ENCODE measurements at regions of chrX and their contacts with region 1.

Region 1: DNA sequence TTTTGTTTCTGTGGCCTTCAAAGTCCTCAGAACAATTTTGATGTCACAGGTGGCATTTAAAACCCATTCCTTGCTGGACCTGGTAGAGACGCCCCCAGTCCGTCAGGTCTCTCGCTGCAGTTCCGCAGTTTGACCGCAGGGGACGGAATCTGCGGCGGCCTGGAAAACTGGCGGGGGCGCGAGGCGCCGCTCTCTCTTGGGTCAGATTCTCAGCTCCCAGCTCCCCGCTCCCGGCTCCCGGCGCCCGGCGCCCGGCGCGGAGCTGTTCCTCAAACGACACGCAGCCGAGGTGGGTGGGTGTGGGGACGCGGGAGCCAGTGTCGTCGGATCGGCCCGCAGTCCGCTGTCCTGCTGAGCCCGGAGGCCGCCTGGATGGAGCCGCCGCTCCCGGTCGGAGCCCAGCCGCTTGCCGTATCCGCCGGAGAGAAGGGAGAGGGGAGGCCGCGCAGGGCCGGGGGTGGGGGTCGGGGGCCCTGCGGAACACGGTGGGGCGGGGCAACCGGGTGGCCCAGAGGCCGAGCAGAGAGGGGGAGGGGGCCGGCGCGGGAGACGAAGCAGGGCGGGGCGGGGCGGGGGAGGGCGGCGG is at the start of gene OCRL:
- DNase-seq: peak; percentile 66
- H3K4me3 ChIP-seq: peak within 1 kb of the TSS; percentile 53 to 79 (median 55)
- H3K27ac ChIP-seq: peak within 1 kb of the TSS; percentile 44
- H3K4me1 ChIP-seq: peaks cover 10% of the 10 kb centered on the region
- H3K27me3 ChIP-seq: peaks cover 0 to 2% of the 10 kb centered on the region in 2 experiments
- CTCF ChIP-seq: peak; percentile 43 to 74
- POLR2A ChIP-seq: no peak
- total RNA-seq, gene OCRL: 19.7 and 20.9 TPM in 2 replicates

Region 2: DNA sequence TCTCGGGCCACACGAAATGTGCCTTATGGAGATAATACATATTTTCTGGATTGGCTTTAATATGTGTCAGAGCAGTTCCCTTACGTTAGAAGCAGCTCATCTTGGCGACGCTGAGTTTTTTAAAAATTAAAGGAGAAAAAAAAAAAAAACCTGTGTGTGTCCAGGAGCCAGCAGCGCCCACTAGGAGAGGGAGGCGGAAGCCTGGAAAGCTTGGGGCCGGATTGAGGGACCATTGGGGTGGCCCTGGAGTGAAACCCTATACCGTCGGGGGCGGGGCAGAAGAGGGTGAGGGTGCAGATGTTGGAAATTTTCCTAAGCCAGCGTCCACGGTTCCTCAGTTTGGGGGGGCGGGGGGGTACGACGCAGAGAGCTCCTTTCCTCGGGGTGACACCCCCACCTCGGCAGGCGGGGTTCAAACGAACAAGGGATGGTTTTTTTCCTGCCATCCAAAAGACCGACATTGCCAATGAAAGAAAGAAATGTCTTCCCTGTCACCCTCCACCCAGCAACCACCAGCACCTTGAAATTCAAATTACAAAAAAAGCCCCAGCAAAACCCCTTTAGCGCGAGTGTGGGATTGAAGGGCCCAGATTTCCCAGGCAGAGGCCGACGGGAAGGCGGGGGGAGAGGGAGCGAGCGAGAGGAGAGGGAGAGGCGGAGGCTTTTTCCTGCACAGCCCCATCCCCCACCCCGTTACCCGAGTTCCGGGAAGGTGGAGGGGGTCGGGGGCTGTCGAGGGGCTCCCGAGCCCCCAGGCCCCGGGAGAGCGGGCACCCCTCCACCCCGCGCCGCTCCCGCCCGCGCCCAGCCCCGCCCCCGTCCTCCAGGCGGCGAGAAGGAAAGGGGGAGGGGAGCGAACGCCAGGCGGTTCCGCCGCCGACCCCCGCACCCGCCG is 17.7 kb before region 1 on chrX:
- CTCF ChIA-PET with region 1: interaction called, 4 read pairs
- POLR2A ChIA-PET with region 1: no interaction called
- dilution Hi-C with region 1: no loop called
- intact Hi-C with region 1: loop called (anchors 2 kb)
- DNase-seq: peak; percentile 42
- H3K4me3 ChIP-seq: peak overlapping the region; percentile 68 to 88 (median 85)
- H3K27ac ChIP-seq: no peak overlapping the region
- H3K4me1 ChIP-seq: peaks cover 5% of the 10 kb centered on the region
- H3K27me3 ChIP-seq: peaks cover 0 to 10% of the 10 kb centered on the region in 2 experiments
- CTCF ChIP-seq: no peak
- POLR2A ChIP-seq: no peak

Measured in endothelial cell of umbilical vein (primary cell).